Activated T-helper 2 cell treated with anti-CD3 and anti-CD28 coated beads, Interferon-gamma antibody, Interleukin-2, Interleukin-4, amounts not matched to agents 10 μg/mL and 5 μg/mL and 100 μg/mL, durations not matched to agents 14 hours and 24 hours and 36 hours (primary cell): ENCODE measurements at regions of chr2 and their contacts with region 1.

Region 1: DNA sequence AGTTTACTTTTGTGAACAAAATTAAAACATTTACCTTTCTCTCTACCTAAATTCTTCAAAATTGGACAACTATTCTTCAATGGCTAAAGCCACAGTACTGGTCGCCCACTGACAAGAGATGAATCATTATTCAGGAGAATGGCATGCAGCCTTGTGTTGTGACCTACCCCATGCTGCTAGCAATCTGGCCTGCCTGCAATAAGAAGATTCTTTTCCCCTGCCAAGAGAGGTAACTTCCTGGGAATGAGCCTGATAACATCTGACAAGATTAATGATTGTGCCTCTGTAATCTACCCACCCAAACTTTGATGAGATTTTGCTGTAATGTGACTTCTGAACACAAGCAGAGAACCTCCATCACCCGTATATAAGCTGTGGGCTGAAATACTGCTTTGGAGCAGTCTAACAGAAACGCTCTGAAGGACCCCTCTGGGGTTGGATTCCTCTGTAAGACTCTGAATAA is 47.0 kb upstream of the ST3GAL5 start:
- DNase-seq: no peak
- H3K4me3 Mint-ChIP-seq: no peak overlapping the region
- H3K27ac Mint-ChIP-seq: no peak overlapping the region
- H3K4me1 Mint-ChIP-seq: peaks cover 21% of the 10 kb centered on the region
- H3K27me3 Mint-ChIP-seq: peaks cover 9% of the 10 kb centered on the region

Region 2: DNA sequence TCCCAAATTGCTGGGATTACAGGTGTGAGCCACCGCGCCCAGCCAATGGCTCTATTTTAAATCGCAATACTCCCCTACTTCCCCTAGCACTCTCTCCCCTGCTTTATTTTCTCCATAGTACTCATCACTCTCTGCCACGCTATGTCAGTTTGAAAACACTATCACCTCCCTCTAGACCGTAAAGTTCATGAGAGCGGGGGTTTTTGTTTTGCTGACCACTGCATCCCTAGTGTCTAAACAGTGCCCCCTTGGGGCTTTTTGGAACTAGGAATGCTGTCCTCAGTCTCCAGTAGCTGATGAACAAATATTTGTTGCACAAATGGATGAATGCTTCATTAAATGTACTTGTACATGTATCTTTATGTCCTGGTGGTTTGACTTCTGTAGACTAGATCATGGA is 137.9 kb before region 1 on chr2:
- intact Hi-C with region 1: no loop called
- DNase-seq: no peak
- H3K4me3 Mint-ChIP-seq: no peak overlapping the region
- H3K27ac Mint-ChIP-seq: no peak overlapping the region
- H3K4me1 Mint-ChIP-seq: peaks cover 2% of the 10 kb centered on the region
- H3K27me3 Mint-ChIP-seq: peaks cover 15% of the 10 kb centered on the region

Region 3: GRCh38 chr2:85999061-85999831 is 63.5 kb after region 1 on chr2:
- intact Hi-C with region 1: loop called (anchors 2 kb)
- DNase-seq: peak; percentile 58
- H3K4me3 Mint-ChIP-seq: peak overlapping the region; percentile 20
- H3K27ac Mint-ChIP-seq: peak overlapping the region; percentile 77
- H3K4me1 Mint-ChIP-seq: peaks cover 68% of the 10 kb centered on the region
- H3K27me3 Mint-ChIP-seq: no peaks in the 10 kb centered on the region